ENCODE measurements at regions of chr9 and their contacts with region 1.

Region 1: GRCh38 chr9:15606643-15607472 is 54.0 kb downstream of the CCDC171 start:
- DNase-seq: peak; percentile 78
- H3K4me3 Mint-ChIP-seq: no peak overlapping the region
- H3K27ac Mint-ChIP-seq: no peak overlapping the region
- H3K4me1 Mint-ChIP-seq: peaks cover 5% of the 10 kb centered on the region
- H3K27me3 Mint-ChIP-seq: no peaks in the 10 kb centered on the region

Region 2: GRCh38 chr9:15104826-15105420 is 501.9 kb before region 1 on chr9:
- intact Hi-C with region 1: loop called (anchors 1 kb)
- DNase-seq: peak; percentile 84
- H3K4me3 Mint-ChIP-seq: no peak overlapping the region
- H3K27ac Mint-ChIP-seq: no peak overlapping the region
- H3K4me1 Mint-ChIP-seq: no peaks in the 10 kb centered on the region
- H3K27me3 Mint-ChIP-seq: peaks cover 11% of the 10 kb centered on the region

Region 3: GRCh38 chr9:15510789-15511575 is 95.9 kb before region 1 on chr9 and contains the start of gene PSIP1:
- intact Hi-C with region 1: loop called (anchors 10 kb)
- DNase-seq: peak; percentile 96
- H3K4me3 Mint-ChIP-seq: peak within 1 kb of the TSS; percentile 87
- H3K27ac Mint-ChIP-seq: peak within 1 kb of the TSS; percentile 100
- H3K4me1 Mint-ChIP-seq: peaks cover 41% of the 10 kb centered on the region
- H3K27me3 Mint-ChIP-seq: peaks cover 3% of the 10 kb centered on the region
- total RNA-seq, gene PSIP1: 106 TPM in 2 replicates

Region 4: DNA sequence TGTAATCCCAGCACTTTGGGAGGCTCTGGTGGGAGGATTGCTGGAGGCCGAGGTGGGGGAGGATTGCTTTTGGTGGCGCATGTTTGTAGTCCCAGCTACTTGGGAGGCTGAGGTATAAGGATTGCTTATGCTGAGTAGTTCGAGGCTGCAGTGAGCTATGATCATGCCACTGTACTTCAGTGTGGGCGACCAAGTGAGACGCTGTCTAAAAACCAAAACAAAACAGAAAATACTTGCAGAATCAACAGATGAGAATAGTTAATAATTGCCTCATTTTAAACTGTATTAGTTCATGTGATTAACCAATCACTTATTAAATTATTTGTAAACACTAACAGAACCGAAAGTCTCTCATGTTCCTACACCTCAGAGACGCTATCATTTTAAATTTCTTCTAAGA is 64.0 kb after region 1 on chr9:
- intact Hi-C with region 1: no loop called
- DNase-seq: no peak
- H3K4me3 Mint-ChIP-seq: no peak overlapping the region
- H3K27ac Mint-ChIP-seq: no peak overlapping the region
- H3K4me1 Mint-ChIP-seq: no peaks in the 10 kb centered on the region
- H3K27me3 Mint-ChIP-seq: no peaks in the 10 kb centered on the region